ENCODE measurements at regions of chr3 and their contacts with region 1.

Region 1: DNA sequence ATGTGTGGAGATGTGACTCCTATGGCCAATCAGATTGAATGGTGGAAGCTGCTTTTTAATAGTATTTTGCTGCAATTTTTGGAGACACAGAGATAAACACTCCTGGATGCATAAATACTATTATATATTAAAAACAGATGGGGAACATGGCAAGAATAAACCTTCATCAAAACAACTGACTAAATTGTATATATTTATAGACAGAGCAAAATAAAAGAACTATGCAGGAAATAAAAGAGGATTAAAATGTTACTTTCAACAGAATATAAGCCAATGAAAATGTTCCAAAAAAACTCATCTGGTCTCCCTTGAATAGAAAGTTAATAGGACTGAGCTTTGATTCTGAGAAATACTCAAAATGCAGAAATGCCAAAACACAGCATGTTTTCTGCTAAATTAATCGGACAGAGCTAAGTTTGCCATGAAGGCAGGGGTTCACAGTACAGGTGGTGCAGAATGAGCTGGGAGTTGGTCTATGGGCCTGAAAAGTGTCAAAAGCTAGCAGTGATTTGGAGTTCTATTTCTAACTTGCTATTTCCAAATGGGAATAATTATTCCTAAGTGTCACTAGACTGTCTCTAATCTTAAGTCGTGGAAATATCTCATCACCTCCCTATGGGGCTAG is 227.2 kb downstream of the CNTN3 start:
- DNase-seq: no peak
- H3K4me3 ChIP-seq: no peak overlapping the region
- H3K27me3 ChIP-seq: no peaks in the 10 kb centered on the region
- CTCF ChIP-seq: no peak

Region 2: DNA sequence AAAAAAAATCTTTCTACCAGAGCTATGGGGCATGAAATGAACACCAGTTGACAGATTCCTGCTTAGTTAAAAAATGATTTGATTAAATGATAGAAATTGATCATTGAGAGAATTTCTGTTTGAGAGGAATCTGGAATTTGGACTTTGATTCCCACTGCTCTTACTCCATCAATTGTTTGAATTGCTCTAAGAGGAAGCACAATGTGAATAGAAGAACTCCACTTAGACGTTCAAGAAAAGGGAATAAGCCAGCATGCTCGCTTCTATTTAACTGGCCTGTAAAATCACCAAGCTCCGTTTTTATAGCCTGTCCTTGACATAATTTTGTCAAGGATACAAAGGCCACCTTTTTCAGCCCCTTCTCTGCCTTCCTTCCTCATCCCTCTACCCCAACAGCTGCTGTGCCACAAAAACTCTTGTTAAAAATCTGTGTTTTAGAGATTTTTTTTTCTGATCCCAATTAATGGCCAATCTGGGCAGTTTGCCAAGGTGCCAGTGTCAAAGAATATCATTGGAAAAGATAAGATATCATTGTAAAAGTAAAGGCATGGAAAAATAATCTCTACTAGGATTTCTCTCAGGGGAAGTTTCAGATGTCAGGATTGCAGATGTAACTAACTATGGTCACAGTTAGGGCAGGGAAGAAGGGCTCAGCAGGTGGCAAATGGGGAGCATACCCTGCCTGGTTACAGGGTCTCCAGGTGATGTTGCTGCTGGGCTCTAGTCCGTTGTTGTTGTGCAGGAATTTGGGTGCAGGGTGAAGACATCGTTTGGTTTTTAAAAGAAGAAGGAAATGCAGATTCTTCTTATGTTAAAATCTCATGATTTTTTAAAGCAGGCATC is 460.6 kb before region 1 on chr3:
- CTCF ChIA-PET with region 1: no interaction called
- POLR2A ChIA-PET with region 1: no interaction called
- DNase-seq: no peak
- H3K4me3 ChIP-seq: no peak overlapping the region
- H3K27me3 ChIP-seq: no peaks in the 10 kb centered on the region
- CTCF ChIP-seq: no peak

Region 3: GRCh38 chr3:74375653-74376052 is 11.6 kb before region 1 on chr3:
- CTCF ChIA-PET with region 1: interaction called, 10 read pairs
- POLR2A ChIA-PET with region 1: no interaction called
- DNase-seq: no peak
- H3K4me3 ChIP-seq: no peak overlapping the region
- H3K27me3 ChIP-seq: no peaks in the 10 kb centered on the region
- CTCF ChIP-seq: no peak

Measured in BJ (cell line).